T-cell (primary cell): ENCODE measurements at regions of chr9 and their contacts with region 1.

Region 1: GRCh38 chr9:123020796-123021195 is 12.7 kb upstream of the GPR21 start:
- DNase-seq: no peak
- ATAC-seq: no peak
- H3K4me3 ChIP-seq: no peak overlapping the region
- H3K4me3 Mint-ChIP-seq: no peak overlapping the region
- H3K27ac ChIP-seq: no peak overlapping the region
- H3K27ac Mint-ChIP-seq: no peak overlapping the region
- H3K4me1 ChIP-seq: no peaks in the 10 kb centered on the region
- H3K4me1 Mint-ChIP-seq: no peaks in the 10 kb centered on the region
- H3K27me3 ChIP-seq: no peaks in the 10 kb centered on the region
- H3K27me3 Mint-ChIP-seq: no peaks in the 10 kb centered on the region

Region 2: GRCh38 chr9:123472862-123473614 is 452.2 kb after region 1 on chr9:
- CTCF ChIA-PET with region 1: no interaction called
- POLR2A ChIA-PET with region 1: interaction called in 1 of 2 experiments, 11 read pairs
- DNase-seq: no peak
- ATAC-seq: no peak
- H3K4me3 ChIP-seq: no peak overlapping the region
- H3K4me3 Mint-ChIP-seq: no peak overlapping the region
- H3K27ac ChIP-seq: no peak overlapping the region
- H3K27ac Mint-ChIP-seq: no peak overlapping the region
- H3K4me1 ChIP-seq: no peaks in the 10 kb centered on the region
- H3K4me1 Mint-ChIP-seq: no peaks in the 10 kb centered on the region
- H3K27me3 ChIP-seq: no peaks in the 10 kb centered on the region
- H3K27me3 Mint-ChIP-seq: no peaks in the 10 kb centered on the region